Activated CD4-positive, alpha-beta T cell treated with anti-CD3 and anti-CD28 coated beads for 36 hours (primary cell): ENCODE measurements at regions of chr9 and their contacts with region 1.

Region 1: GRCh38 chr9:100938507-100938906 is 90.0 kb upstream of the PLPPR1 start:
- DNase-seq: no peak
- ATAC-seq: no peak
- H3K4me3 Mint-ChIP-seq: no peak overlapping the region
- H3K27ac Mint-ChIP-seq: no peak overlapping the region
- H3K4me1 Mint-ChIP-seq: no peaks in the 10 kb centered on the region
- H3K27me3 Mint-ChIP-seq: peaks cover 2% of the 10 kb centered on the region

Region 2: GRCh38 chr9:100890321-100890720 is 48.2 kb before region 1 on chr9:
- CTCF ChIA-PET with region 1: no interaction called
- POLR2A ChIA-PET with region 1: interaction called, 15 read pairs
- intact Hi-C with region 1: no loop called
- DNase-seq: no peak
- ATAC-seq: no peak
- H3K4me3 Mint-ChIP-seq: no peak overlapping the region
- H3K27ac Mint-ChIP-seq: no peak overlapping the region
- H3K4me1 Mint-ChIP-seq: no peaks in the 10 kb centered on the region
- H3K27me3 Mint-ChIP-seq: no peaks in the 10 kb centered on the region